BJ (cell line): ENCODE measurements at regions of chr11 and their contacts with region 1.

Region 1: DNA sequence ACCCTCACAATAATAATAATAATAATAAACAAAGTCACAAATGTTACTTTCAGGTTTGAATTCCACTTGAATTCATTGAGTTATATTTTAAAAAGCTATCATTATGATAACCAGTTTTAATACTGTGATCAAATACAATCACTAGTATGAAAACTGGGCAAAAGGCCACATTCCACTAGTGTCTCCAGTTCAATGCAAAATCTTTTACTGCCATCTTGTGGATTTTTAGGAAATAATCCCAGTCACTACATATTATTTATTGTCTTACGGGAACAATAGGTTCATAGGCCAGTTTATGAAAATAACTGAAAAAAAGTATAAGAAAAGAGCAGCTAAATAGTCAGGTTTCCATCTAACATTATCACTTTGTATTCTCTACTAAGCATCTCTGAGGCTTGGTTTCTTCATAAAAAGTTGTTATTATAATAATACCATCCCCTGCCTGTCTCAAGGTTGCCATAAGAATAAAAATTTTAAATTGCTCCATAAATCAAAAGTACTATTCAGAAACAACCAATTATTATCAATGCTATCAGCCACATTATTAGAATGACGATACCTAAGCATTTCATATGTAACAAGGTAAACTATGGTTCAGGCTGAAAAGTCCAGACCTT is 533.9 kb upstream of the CCDC90B start:
- DNase-seq: peak; percentile 18
- H3K4me3 ChIP-seq: no peak overlapping the region
- H3K27me3 ChIP-seq: no peaks in the 10 kb centered on the region
- CTCF ChIP-seq: peak; percentile 59

Region 2: GRCh38 chr11:83801780-83802179 is 18.3 kb before region 1 on chr11:
- CTCF ChIA-PET with region 1: interaction called, 18 read pairs
- POLR2A ChIA-PET with region 1: no interaction called
- DNase-seq: no peak
- H3K4me3 ChIP-seq: no peak overlapping the region
- H3K27me3 ChIP-seq: no peaks in the 10 kb centered on the region
- CTCF ChIP-seq: peak; percentile 33; the same call in 1 of the 2 replicates

Region 3: GRCh38 chr11:83951474-83951873 is 131.4 kb after region 1 on chr11:
- CTCF ChIA-PET with region 1: no interaction called
- POLR2A ChIA-PET with region 1: no interaction called
- DNase-seq: no peak
- H3K4me3 ChIP-seq: no peak overlapping the region
- H3K27me3 ChIP-seq: no peaks in the 10 kb centered on the region
- CTCF ChIP-seq: no peak